ENCODE measurements at regions of chr3 and their contacts with region 1.

Region 1: DNA sequence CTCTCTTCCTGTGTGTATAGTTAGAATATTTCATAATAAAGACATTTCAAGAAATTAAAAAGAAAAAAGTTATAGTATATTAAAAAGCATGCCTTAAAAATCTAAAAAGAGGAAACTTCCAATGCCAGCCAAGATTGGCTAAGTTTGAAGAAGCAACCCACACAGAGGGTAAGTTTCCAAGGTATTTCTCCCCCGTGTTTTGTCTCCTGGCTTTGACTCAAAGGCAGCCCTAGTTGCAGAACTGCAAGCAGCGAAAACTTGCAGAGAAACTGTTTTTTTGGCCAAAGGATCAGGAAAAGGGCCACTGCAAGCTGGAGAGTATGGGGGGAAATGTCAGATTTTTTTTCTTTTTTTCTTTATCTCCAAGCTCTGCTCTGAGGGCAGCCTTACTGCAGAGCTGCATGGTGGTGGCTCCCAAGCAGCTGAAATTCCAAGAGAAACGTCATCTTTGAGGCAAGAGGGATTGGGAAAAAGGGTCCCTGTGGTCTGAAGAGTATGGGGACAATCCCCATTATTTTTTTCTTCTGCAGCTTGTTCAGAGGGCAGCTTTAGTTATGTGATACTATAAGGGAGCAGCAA is 23.0 kb downstream of the HACL1 start:
- DNase-seq: no peak
- ATAC-seq: peak in 1 of 2 donors; percentile 16
- H3K4me3 ChIP-seq: no peak overlapping the region
- H3K27ac ChIP-seq: no peak overlapping the region
- H3K4me1 ChIP-seq: no peaks in the 10 kb centered on the region
- H3K27me3 ChIP-seq: no peaks in the 10 kb centered on the region

Region 2: DNA sequence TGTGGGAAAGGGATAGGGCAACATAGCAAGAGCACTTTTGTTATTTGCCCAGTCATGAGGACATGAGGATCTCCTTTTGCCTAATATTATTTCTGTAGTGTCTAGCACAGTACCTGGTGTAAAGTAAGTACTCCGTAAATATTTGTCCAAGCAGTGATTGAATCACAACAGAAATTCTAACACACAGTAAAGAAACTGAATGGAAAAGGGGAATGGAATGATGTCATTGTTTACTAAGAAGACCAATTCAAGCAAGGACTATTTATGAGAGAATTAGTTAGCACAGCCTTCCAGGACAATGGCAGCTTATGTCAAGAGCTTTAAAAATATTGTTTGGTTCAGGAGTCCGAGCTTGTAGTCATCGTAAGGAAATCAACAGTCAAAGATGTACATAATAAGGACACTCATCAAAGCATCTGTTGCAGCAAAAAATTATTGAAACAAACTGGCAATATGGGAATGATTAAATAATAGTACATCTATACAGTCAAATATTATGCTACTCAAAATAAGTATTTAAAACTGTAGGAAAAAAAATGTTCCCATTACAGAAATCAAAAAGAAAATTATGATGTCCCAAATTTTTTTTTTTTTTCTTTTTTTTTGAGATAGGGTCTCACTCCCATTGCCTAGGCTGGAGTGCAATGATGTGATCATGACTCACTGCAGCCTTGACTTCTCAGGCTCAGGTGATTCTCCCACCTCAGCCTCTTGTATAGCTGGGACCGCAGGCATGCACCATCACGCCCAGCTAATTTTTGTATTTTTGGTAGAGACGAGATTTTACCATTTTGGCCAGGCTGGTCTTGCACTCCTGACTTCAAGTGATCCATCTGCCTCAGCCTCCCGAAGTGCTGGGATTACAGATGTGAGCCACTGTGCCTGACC is 354.4 kb before region 1 on chr3:
- intact Hi-C with region 1: loop called in 1 of 4 experiments (anchors 10 kb)
- DNase-seq: no peak
- ATAC-seq: no peak
- H3K4me3 ChIP-seq: no peak overlapping the region
- H3K27ac ChIP-seq: no peak overlapping the region
- H3K4me1 ChIP-seq: peaks cover 1% of the 10 kb centered on the region
- H3K27me3 ChIP-seq: no peaks in the 10 kb centered on the region

Region 3: GRCh38 chr3:15256861-15257341 is 321.5 kb before region 1 on chr3:
- intact Hi-C with region 1: loop called in 1 of 4 experiments (anchors 10 kb)
- DNase-seq: no peak
- ATAC-seq: peak; percentile 61 to 73
- H3K4me3 ChIP-seq: no peak overlapping the region
- H3K27ac ChIP-seq: peak overlapping the region; percentile 65
- H3K4me1 ChIP-seq: peaks cover 9% of the 10 kb centered on the region
- H3K27me3 ChIP-seq: no peaks in the 10 kb centered on the region

Region 4: DNA sequence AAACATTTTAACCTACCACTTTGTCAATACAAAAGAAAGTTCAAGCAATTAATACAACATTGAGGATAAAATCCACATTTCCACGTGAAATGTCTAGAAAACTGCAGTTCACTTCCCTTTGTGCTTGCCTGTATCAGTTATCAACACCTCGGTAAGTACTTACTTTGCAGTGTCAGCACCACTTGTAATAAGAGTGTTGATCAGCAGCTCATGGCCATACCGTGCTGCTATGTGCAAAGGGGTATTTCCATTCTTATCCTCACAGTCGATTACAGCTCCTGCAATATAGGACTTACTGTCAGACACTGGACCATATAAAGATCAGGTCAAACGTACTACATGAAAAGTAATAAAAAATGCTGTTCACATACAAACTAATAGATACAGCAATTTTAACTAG is 135.0 kb after region 1 on chr3:
- intact Hi-C with region 1: no loop called
- DNase-seq: no peak
- ATAC-seq: no peak
- H3K4me3 ChIP-seq: no peak overlapping the region
- H3K27ac ChIP-seq: no peak overlapping the region
- H3K4me1 ChIP-seq: no peaks in the 10 kb centered on the region
- H3K27me3 ChIP-seq: no peaks in the 10 kb centered on the region

Region 5: GRCh38 chr3:15726043-15726442 is 147.7 kb after region 1 on chr3:
- intact Hi-C with region 1: no loop called
- DNase-seq: no peak
- ATAC-seq: no peak
- H3K4me3 ChIP-seq: no peak overlapping the region
- H3K27ac ChIP-seq: no peak overlapping the region
- H3K4me1 ChIP-seq: no peaks in the 10 kb centered on the region
- H3K27me3 ChIP-seq: no peaks in the 10 kb centered on the region

Measured in right cardiac atrium (tissue), 5 donors.